Heart left ventricle (tissue), 16 donors: ENCODE measurements at regions of chr2 and their contacts with region 1.

Region 1: DNA sequence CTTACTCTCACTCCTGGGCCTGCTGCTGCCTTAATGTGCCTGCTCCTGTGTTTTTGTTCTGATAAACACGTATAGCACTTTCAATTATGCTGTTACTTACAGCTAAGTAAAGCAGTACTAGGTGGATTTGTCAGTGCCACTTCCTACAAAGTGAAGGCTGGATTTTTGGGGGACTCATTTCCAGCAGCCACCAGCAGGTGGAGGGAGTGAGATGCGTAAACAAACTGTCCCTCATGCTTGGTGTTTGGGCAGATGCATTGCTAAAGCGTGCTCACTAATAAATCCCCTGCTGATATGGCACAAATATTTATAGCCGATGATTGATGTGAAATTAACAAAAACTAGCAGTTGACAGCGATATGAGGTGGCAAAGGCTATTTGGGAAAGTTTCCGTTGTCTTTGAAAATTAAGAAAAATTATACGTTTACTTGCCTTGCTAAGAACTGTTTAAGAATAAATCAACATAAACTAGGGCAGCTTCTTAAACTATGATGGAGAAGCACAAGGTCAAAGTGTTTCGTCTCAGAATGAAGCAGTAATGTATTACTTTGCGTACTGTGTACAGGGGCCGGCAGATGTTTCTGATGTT is 101.7 kb downstream of the AGAP1 start:
- DNase-seq: peak in 4 of 5 donors; percentile 60 to 73 (median 66)
- ATAC-seq: peak; percentile 21 to 74 (median 65)
- H3K4me3 ChIP-seq: no peak overlapping the region
- H3K27ac ChIP-seq: no peak overlapping the region
- H3K4me1 ChIP-seq: peaks cover 0 to 12% (median 2%) of the 10 kb centered on the region in 12 donors
- H3K27me3 ChIP-seq: no peaks in the 10 kb centered on the region
- CTCF ChIP-seq: peak; percentile 65 to 94 (median 85)
- POLR2A ChIP-seq: no peak

Region 2: GRCh38 chr2:235433860-235434259 is 161.7 kb before region 1 on chr2:
- intact Hi-C with region 1: loop called in 9 of 10 experiments (anchors 1 to 10 kb)
- DNase-seq: peak in 4 of 5 donors; percentile 66 to 84 (median 71)
- ATAC-seq: peak; percentile 82 to 96 (median 93)
- H3K4me3 ChIP-seq: no peak overlapping the region
- H3K27ac ChIP-seq: peak overlapping the region in 11 of 12 donors; percentile 56 to 79 (median 67)
- H3K4me1 ChIP-seq: peaks cover 0 to 22% (median 17%) of the 10 kb centered on the region in 12 donors
- H3K27me3 ChIP-seq: no peaks in the 10 kb centered on the region
- CTCF ChIP-seq: peak in 8 of 12 donors; percentile 10 to 42 (median 28)
- POLR2A ChIP-seq: no peak

Region 3: GRCh38 chr2:235500761-235501672 is 94.5 kb before region 1 on chr2:
- intact Hi-C with region 1: loop called in 1 of 10 experiments (anchors 5 kb)
- DNase-seq: no peak
- ATAC-seq: peak in 2 of 4 donors; percentile 36 to 53
- H3K4me3 ChIP-seq: peak overlapping the region in 9 of 12 donors; percentile 2 to 34 (median 23)
- H3K27ac ChIP-seq: peak overlapping the region in 5 of 12 donors; percentile 7 to 67 (median 35)
- H3K4me1 ChIP-seq: peaks cover 2 to 70% (median 41%) of the 10 kb centered on the region in 12 donors
- H3K27me3 ChIP-seq: peaks cover 0 to 3% (median 0%) of the 10 kb centered on the region in 9 donors
- CTCF ChIP-seq: no peak
- POLR2A ChIP-seq: no peak

Region 4: DNA sequence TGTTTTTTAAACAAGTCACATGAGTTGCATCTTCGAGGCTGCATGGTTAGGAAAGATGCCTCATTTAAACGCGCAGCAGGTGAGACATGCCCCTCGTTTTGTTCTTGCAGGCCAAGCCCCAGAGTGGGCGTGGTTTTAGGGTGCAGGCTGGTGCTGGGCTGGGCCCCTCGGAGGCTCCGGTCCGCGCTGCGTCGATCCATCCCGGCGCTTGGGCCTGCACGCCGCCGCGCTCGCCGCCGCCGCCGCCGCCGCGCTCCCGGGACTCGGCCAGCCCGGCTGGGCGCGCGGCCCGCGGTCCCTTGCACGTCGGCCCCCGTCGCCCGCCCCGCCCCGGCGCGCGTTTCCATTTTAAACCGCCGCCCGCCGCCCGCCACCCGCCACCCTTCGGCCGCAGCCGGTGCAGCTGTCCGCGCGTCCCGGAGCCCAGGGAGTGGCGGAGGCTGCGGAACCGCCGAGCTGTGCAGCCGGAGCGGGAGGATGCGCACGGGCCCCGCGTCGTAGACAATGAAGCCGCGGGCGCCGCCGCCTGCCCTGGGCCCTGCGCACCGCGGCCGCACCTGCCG is 73.8 kb after region 1 on chr2:
- intact Hi-C with region 1: loop called (anchors 1 to 5 kb)
- DNase-seq: peak; percentile 71 to 86 (median 80)
- ATAC-seq: peak in 3 of 4 donors; percentile 64 to 85 (median 82)
- H3K4me3 ChIP-seq: peak overlapping the region in 11 of 12 donors; percentile 20 to 75 (median 58)
- H3K27ac ChIP-seq: peak overlapping the region in 1 of 12 donors; percentile 48
- H3K4me1 ChIP-seq: peaks cover 0 to 43% (median 18%) of the 10 kb centered on the region in 12 donors
- H3K27me3 ChIP-seq: peaks cover 0 to 42% (median 0%) of the 10 kb centered on the region in 9 donors
- CTCF ChIP-seq: peak in 2 of 12 donors; percentile 7 to 27
- POLR2A ChIP-seq: no peak

Region 5: GRCh38 chr2:236049981-236050380 is 454.5 kb after region 1 on chr2:
- intact Hi-C with region 1: no loop called
- DNase-seq: no peak
- ATAC-seq: no peak
- H3K4me3 ChIP-seq: no peak overlapping the region
- H3K27ac ChIP-seq: no peak overlapping the region
- H3K4me1 ChIP-seq: no peaks in the 10 kb centered on the region
- H3K27me3 ChIP-seq: no peaks in the 10 kb centered on the region
- CTCF ChIP-seq: no peak
- POLR2A ChIP-seq: no peak